Activated CD4-positive, alpha-beta memory T cell treated with anti-CD3 and anti-CD28 coated beads for 36 hours (primary cell): ENCODE measurements at regions of chr14 and their contacts with region 1.

Region 1: GRCh38 chr14:105490572-105491366 is at the start of gene TEDC1:
- DNase-seq: peak; percentile 100
- H3K4me3 Mint-ChIP-seq: peak within 1 kb of the TSS; percentile 82
- H3K27ac Mint-ChIP-seq: peak within 1 kb of the TSS; percentile 91
- H3K4me1 Mint-ChIP-seq: peaks cover 20% of the 10 kb centered on the region
- H3K27me3 Mint-ChIP-seq: no peaks in the 10 kb centered on the region
- total RNA-seq, gene TEDC1: 40.2 to 44.8 TPM

Region 2: GRCh38 chr14:104708606-104709268 is 782.0 kb before region 1 on chr14:
- CTCF ChIA-PET with region 1: no interaction called
- POLR2A ChIA-PET with region 1: no interaction called
- intact Hi-C with region 1: no loop called
- DNase-seq: peak; percentile 80
- H3K4me3 Mint-ChIP-seq: no peak overlapping the region
- H3K27ac Mint-ChIP-seq: no peak overlapping the region
- H3K4me1 Mint-ChIP-seq: peaks cover 1% of the 10 kb centered on the region
- H3K27me3 Mint-ChIP-seq: no peaks in the 10 kb centered on the region

Region 3: DNA sequence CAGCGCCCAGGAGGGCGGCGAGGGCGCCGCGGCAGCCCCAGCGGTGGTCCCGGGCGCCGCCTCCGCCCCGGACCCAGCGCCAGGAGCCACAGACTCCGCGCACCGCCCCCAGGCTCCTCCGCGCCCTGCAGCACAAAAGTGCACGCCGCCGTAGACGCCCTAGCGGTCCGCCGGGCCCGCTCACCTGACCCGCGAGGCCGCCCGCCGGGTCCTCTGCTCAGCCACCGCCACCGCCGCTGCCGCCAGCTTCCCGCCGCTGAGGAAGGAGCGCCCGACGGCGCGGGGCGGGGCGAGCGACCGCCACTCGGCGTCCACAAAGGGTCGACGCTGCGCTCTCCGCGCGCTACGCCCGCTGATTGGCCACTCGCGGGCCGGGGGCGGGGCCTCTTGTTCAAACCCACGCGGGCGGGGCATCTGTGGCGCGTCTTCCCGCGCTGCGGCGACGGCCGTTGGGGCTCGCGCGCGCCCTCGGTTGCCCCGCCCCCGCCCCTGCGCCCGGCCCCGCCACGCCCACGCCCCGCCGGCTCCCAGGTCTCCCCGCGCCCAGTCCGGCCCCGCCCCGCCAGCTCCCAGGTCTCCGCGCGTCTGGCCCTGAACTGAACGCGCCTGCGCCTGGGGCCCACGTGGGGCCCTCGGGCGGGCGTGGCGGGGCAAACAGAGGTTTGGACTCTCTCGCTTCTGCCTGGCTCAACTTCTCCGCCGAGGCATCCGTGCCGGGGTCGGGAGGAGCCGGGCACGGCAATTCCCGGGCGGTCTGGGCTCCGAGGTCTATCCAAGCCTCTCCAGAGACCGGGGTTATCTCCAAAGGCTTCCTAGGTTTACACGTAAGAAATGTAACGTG is 469.7 kb before region 1 on chr14 and contains the start of gene CDCA4:
- CTCF ChIA-PET with region 1: no interaction called
- POLR2A ChIA-PET with region 1: no interaction called
- intact Hi-C with region 1: loop called (anchors 2 kb)
- DNase-seq: peak; percentile 98
- H3K4me3 Mint-ChIP-seq: peak within 1 kb of the TSS; percentile 93
- H3K27ac Mint-ChIP-seq: peak within 1 kb of the TSS; percentile 88
- H3K4me1 Mint-ChIP-seq: peaks cover 70% of the 10 kb centered on the region
- H3K27me3 Mint-ChIP-seq: no peaks in the 10 kb centered on the region
- total RNA-seq, gene CDCA4: 63.4 to 69.1 TPM

Region 4: DNA sequence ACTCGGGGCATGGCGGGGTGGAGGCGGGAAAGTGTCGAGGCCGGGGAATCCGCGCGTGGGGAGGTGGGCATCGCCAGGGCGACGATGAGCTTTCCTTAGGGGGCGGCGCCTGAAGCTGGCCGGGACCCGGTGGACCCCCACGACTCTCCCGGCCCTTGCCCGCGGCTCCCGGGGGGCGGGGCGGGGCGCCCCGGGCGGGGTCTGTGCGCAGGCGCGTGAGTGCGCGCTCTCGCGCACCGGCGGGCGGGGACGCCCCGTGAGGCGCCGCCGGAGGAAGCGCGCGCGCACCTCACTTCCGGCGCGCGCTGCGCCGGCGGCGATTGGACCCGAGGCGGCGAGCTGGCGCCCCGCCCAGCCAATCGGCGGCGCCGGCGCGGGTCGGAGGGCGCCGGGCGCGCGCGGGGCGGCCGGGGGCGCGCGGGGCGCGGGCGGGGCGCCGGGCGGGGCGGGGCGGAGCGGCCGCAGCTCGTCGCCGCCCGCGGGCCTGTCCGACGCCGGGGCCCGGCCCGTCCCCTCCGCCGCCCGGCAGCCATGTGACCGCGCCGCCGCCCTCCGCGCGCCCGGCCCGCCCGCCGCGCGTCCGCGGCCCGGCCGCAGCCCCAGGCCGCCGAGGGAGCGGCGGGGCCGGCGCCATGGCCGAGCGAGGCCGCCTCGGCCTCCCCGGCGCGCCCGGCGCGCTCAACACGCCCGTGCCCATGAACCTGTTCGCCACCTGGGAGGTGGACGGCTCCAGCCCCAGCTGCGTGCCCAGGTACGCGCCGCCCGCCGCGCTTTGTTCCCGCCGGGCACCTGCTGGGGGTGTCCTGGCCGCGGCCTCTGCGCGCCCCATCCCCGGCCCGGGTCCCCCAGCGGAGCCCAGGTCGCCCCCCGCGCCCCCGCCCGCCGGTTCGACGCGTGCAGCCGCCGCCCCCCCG is 176.2 kb before region 1 on chr14 and contains the start of gene PACS2:
- CTCF ChIA-PET with region 1: no interaction called
- POLR2A ChIA-PET with region 1: interaction called, 3 read pairs
- intact Hi-C with region 1: loop called (anchors 1 kb)
- DNase-seq: peak; percentile 79
- H3K4me3 Mint-ChIP-seq: peak within 1 kb of the TSS; percentile 84
- H3K27ac Mint-ChIP-seq: peak within 1 kb of the TSS; percentile 54
- H3K4me1 Mint-ChIP-seq: peaks cover 33% of the 10 kb centered on the region
- H3K27me3 Mint-ChIP-seq: no peaks in the 10 kb centered on the region
- total RNA-seq, gene PACS2: 32.3 to 36.6 TPM

Region 5: DNA sequence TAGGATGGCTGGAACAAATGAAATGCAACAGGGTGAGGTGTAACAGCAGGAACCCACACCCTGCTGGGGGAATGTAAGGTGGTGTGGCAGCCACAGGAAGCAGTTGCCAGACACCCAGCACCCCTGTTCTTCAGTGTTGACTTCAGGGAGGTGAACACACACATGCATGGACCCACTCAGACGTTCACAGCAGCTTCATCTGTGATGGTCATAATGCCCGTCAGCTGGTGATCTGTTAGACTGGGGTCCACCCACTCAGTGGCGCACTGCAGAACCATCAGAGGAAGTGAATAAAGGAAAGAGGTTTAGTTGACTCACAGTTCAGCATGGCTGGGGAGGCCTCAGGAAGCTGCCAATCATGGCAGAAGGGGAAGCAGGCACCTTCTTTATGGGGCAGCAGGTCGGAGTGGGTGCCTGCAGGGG is 115.1 kb before region 1 on chr14:
- CTCF ChIA-PET with region 1: interaction called, 138 read pairs
- POLR2A ChIA-PET with region 1: interaction called, 11 read pairs
- intact Hi-C with region 1: loop called (anchors 1 kb)
- DNase-seq: peak; percentile 82
- H3K4me3 Mint-ChIP-seq: no peak overlapping the region
- H3K27ac Mint-ChIP-seq: peak overlapping the region; percentile 34
- H3K4me1 Mint-ChIP-seq: peaks cover 11% of the 10 kb centered on the region
- H3K27me3 Mint-ChIP-seq: no peaks in the 10 kb centered on the region

Region 6: GRCh38 chr14:105448706-105449111 is 42.1 kb before region 1 on chr14:
- CTCF ChIA-PET with region 1: interaction called, 13 read pairs
- POLR2A ChIA-PET with region 1: no interaction called
- intact Hi-C with region 1: no loop called
- DNase-seq: peak; percentile 67
- H3K4me3 Mint-ChIP-seq: no peak overlapping the region
- H3K27ac Mint-ChIP-seq: no peak overlapping the region
- H3K4me1 Mint-ChIP-seq: no peaks in the 10 kb centered on the region
- H3K27me3 Mint-ChIP-seq: no peaks in the 10 kb centered on the region

Region 7: GRCh38 chr14:105527661-105528581 is 37.2 kb after region 1 on chr14:
- CTCF ChIA-PET with region 1: interaction called, 26 read pairs
- POLR2A ChIA-PET with region 1: interaction called, 4 read pairs
- intact Hi-C with region 1: loop called (anchors 1 kb)
- DNase-seq: peak; percentile 86
- H3K4me3 Mint-ChIP-seq: peak overlapping the region; percentile 75
- H3K27ac Mint-ChIP-seq: peak overlapping the region; percentile 42
- H3K4me1 Mint-ChIP-seq: peaks cover 20% of the 10 kb centered on the region
- H3K27me3 Mint-ChIP-seq: peaks cover 2% of the 10 kb centered on the region